Activated CD4-positive, alpha-beta T cell treated with anti-CD3 and anti-CD28 coated beads for 36 hours (primary cell): ENCODE measurements at regions of chr1 and their contacts with region 1.

Region 1: GRCh38 chr1:207004981-207005830 is 27.4 kb downstream of the C1orf116 start:
- DNase-seq: peak; percentile 64
- ATAC-seq: peak; percentile 57
- H3K4me3 Mint-ChIP-seq: no peak overlapping the region
- H3K27ac Mint-ChIP-seq: no peak overlapping the region
- H3K4me1 Mint-ChIP-seq: peaks cover 2% of the 10 kb centered on the region
- H3K27me3 Mint-ChIP-seq: peaks cover 4% of the 10 kb centered on the region

Region 2: GRCh38 chr1:206992790-206993189 is 12.4 kb before region 1 on chr1:
- CTCF ChIA-PET with region 1: interaction called, 17 read pairs
- POLR2A ChIA-PET with region 1: interaction called, 4 read pairs
- intact Hi-C with region 1: no loop called
- DNase-seq: no peak
- ATAC-seq: no peak
- H3K4me3 Mint-ChIP-seq: no peak overlapping the region
- H3K27ac Mint-ChIP-seq: no peak overlapping the region
- H3K4me1 Mint-ChIP-seq: no peaks in the 10 kb centered on the region
- H3K27me3 Mint-ChIP-seq: peaks cover 16% of the 10 kb centered on the region